IMR-90 (cell line): ENCODE measurements at regions of chr2 and their contacts with region 1.

Region 1: GRCh38 chr2:51441786-51442185 is 409.9 kb upstream of the NRXN1 start:
- DNase-seq: peak; percentile 6
- ATAC-seq: no peak
- H3K4me3 ChIP-seq: no peak overlapping the region
- H3K27ac ChIP-seq: no peak overlapping the region
- H3K4me1 ChIP-seq: no peaks in the 10 kb centered on the region
- H3K27me3 ChIP-seq: no peaks in the 10 kb centered on the region
- CTCF ChIP-seq: no peak
- POLR2A ChIP-seq: no peak
- RAD21 ChIP-seq: no peak

Region 2: GRCh38 chr2:51013079-51013932 is 428.5 kb before region 1 on chr2:
- CTCF ChIA-PET with region 1: interaction called, 10 read pairs
- POLR2A ChIA-PET with region 1: no interaction called
- dilution Hi-C with region 1: no loop called
- in situ Hi-C with region 1: no loop called
- intact Hi-C with region 1: no loop called
- DNase-seq: peak; percentile 12
- ATAC-seq: peak; percentile 66
- H3K4me3 ChIP-seq: no peak overlapping the region
- H3K27ac ChIP-seq: no peak overlapping the region
- H3K4me1 ChIP-seq: peaks cover 2% of the 10 kb centered on the region; the same call in 1 of the 2 replicates
- H3K27me3 ChIP-seq: no peaks in the 10 kb centered on the region
- CTCF ChIP-seq: no peak
- POLR2A ChIP-seq: no peak
- RAD21 ChIP-seq: no peak